ENCODE measurements at regions of chr9 and their contacts with region 1.

Region 1: DNA sequence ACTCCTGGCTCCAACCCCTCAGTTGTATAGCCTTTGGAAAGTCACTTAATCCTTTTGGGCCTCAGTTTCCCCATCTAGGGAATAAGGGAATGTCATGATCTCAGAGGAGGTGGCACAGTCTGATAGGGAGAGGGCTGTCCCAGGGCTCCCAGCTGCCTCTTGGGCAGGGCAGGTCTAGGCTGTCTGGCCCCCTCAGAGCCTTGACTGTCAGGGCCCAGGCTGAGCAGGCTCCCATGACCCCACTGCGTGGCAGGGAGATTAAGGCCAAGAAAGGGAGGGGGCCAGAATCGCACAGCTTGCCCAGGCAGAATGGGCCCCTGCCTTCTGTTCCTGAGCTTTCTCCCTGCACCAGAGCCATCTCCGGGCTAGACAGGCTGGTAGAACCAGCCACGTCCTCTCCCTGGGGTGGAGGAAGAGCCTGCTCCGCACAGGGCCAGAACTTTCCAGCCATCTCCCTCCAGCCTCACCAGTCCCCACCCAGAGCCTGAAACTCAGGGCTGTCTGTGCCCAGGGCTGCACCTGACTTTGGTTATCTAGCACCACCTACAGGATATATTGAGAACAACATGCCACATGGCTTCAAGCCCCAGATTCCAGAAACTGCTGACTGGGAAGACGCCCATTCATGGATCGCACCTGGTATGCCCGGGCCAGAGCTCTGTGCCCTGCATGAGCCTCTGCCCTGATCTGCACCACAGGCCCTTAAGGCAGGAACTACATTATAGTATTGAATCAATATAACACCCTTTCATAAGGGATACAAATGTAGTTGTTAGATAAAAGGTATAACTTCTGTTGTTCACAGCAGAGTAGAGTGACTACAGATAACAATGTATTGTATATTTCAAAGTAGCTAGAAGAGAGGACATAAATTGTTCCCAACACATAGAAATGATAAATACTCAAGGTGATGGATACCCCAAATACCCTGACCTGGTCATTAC is 32.0 kb downstream of the NAIF1 start:
- H3K4me3 Mint-ChIP-seq: no peak overlapping the region
- H3K27ac Mint-ChIP-seq: no peak overlapping the region
- H3K4me1 Mint-ChIP-seq: peaks cover 7% of the 10 kb centered on the region
- H3K27me3 Mint-ChIP-seq: peaks cover 1% of the 10 kb centered on the region

Region 2: DNA sequence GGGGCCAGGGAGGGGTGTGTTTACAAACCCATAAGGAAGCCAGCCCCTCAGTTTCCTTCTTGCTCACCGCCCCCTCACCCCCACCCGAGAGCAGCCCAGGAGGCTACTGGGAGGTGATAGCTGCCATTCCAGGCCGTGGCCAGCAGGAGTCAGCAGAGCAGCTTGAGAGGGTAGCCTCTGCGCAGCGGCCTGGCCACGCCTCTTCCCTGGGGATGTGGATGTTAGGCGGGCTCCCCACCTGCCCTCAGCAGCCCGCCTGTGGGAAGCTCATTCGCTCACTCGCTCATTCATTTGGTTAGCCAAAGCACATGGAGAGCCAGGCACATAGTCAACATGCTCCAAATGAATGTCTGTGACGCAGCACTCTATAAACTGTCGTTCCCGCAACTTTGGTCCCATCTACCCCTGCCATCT is 91.4 kb before region 1 on chr9:
- intact Hi-C with region 1: loop called (anchors 1 kb)
- H3K4me3 Mint-ChIP-seq: no peak overlapping the region
- H3K27ac Mint-ChIP-seq: peak overlapping the region; percentile 50
- H3K4me1 Mint-ChIP-seq: peaks cover 32% of the 10 kb centered on the region
- H3K27me3 Mint-ChIP-seq: no peaks in the 10 kb centered on the region

Region 3: DNA sequence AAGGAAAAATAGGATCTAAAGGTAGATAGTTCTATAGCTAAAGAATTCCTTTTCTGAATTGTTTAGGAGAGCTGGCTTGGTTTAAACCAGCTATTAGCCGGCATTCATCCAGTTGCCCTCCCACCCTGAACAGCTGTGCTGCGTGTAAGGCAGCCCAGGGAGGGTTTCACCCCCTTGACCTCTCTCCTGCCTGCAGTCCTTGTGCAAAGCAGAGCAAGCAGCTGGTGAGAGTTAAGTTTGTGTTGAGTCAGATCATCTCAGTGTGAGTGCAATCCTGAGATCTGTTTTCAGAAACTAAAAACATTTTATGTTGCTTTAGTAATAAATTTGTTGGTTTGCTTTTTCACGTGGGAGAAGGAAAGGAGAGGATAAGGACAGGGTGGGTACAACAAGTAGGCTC is 46.0 kb after region 1 on chr9:
- intact Hi-C with region 1: loop called (anchors 5 kb)
- H3K4me3 Mint-ChIP-seq: no peak overlapping the region
- H3K27ac Mint-ChIP-seq: peak overlapping the region; percentile 63
- H3K4me1 Mint-ChIP-seq: peaks cover 57% of the 10 kb centered on the region
- H3K27me3 Mint-ChIP-seq: no peaks in the 10 kb centered on the region